ENCODE measurements at regions of chr14 and their contacts with region 1.

Region 1: GRCh38 chr14:45253068-45253753 is at the start of gene MIS18BP1:
- DNase-seq: peak; percentile 87
- ATAC-seq: peak; percentile 93 to 96
- H3K4me3 ChIP-seq: peak within 1 kb of the TSS; percentile 66 to 83 (median 76)
- H3K27ac ChIP-seq: peak within 1 kb of the TSS; percentile 77 to 87 (median 82)
- H3K4me1 ChIP-seq: peaks cover 6 to 13% of the 10 kb centered on the region in 2 donors
- H3K27me3 ChIP-seq: no peaks in the 10 kb centered on the region
- CTCF ChIP-seq: peak; percentile 43 to 76 (median 60)
- POLR2A ChIP-seq: peak; percentile 31 to 51
- total RNA-seq, gene MIS18BP1: 4.7 to 7.0 (median 6.1) TPM

Region 2: DNA sequence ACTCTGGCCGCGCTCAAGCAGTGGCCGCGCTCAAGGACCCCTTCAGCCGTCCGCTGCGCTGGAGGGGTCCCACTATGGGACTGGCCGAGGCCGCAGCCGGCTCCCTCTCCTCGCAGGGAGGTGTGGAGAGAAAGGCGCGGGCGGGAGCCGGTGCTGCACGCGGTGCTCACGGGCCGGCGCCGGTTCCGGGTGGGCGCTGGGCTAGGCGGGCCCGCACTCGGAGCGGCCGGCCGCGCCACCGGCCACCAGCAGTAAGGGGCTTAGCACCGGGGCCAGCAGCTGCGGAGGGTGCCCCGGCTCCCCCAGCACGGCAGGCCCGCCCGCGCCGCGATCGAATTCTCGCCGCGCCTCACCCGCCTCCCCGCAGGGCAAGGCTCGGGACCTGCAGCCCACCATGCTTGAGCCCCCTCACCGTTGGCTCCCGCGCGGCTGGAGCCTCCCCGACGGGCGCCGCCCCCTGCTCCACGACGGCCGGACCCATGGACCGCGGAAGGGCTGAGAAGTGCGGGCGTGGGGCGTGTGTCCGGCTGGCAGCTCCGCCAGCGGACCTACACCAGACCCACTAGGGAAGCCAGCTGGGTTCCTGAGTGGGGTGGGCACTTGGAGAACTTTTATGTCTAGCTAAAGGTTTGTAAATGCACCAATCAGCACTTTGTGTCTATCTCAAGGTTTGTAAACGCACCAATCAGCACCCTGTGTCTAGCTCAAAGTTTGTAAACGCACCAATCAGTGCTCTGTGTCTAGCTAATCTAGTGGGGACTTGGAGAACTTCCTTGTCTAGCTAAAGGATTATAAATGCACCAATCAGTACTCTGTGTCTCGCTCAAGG is 341.0 kb before region 1 on chr14:
- in situ Hi-C with region 1: loop called (anchors 25 kb)
- intact Hi-C with region 1: no loop called
- DNase-seq: no peak
- ATAC-seq: no peak
- H3K4me3 ChIP-seq: peak overlapping the region; percentile 39 to 47 (median 44)
- H3K27ac ChIP-seq: no peak overlapping the region
- H3K4me1 ChIP-seq: no peaks in the 10 kb centered on the region
- H3K27me3 ChIP-seq: peaks cover 17 to 24% (median 22%) of the 10 kb centered on the region in 3 donors
- CTCF ChIP-seq: no peak
- POLR2A ChIP-seq: no peak

Region 3: DNA sequence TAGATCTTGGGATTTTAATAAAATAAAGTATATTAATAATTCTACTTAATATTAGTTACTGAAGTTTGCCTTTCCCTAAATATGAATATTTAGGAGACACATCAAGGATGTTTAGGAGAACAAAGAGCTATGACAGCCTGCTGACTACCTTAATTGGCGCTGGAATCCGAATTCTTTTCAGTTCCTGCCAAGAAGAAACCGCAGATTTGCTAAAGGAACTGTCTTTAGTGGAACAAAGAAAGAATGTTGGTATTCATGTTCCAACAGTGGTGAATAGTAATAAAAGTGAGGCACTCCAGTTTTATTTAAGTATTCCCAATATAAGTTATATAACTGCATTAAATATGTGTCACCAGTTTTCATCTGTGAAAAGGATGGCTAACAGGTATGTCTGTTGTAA is 54.7 kb before region 1 on chr14:
- in situ Hi-C with region 1: no loop called
- intact Hi-C with region 1: no loop called
- DNase-seq: no peak
- ATAC-seq: no peak
- H3K4me3 ChIP-seq: no peak overlapping the region
- H3K27ac ChIP-seq: no peak overlapping the region
- H3K4me1 ChIP-seq: no peaks in the 10 kb centered on the region
- H3K27me3 ChIP-seq: no peaks in the 10 kb centered on the region
- CTCF ChIP-seq: no peak
- POLR2A ChIP-seq: no peak

Region 4: DNA sequence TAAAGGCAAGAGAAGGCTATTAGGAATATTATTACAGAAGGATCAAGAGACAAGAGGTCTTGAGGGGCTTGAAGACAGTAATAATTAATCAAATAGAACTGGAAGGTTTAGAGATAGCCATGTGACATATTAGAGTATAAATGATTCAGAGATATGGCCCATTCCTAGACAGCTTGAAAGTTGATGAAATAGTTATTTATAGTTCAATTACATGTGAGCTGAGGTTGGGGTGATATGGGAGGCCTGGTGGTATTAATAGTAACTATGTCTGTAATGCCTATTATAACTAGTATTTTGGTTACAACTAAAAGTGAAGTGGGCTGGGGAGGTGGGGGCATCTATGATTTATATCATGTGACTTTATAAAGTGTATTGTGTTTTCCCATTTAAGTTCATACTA is 13.9 kb after region 1 on chr14:
- in situ Hi-C with region 1: no loop called
- intact Hi-C with region 1: loop called (anchors 1 kb)
- DNase-seq: no peak
- ATAC-seq: peak; percentile 86 to 94
- H3K4me3 ChIP-seq: no peak overlapping the region
- H3K27ac ChIP-seq: peak overlapping the region in 3 of 4 donors; percentile 16 to 45 (median 35)
- H3K4me1 ChIP-seq: peaks cover 6 to 11% of the 10 kb centered on the region in 2 donors
- H3K27me3 ChIP-seq: no peaks in the 10 kb centered on the region
- CTCF ChIP-seq: no peak
- POLR2A ChIP-seq: no peak